T-cell (primary cell): ENCODE measurements at regions of chr11 and their contacts with region 1.

Region 1: DNA sequence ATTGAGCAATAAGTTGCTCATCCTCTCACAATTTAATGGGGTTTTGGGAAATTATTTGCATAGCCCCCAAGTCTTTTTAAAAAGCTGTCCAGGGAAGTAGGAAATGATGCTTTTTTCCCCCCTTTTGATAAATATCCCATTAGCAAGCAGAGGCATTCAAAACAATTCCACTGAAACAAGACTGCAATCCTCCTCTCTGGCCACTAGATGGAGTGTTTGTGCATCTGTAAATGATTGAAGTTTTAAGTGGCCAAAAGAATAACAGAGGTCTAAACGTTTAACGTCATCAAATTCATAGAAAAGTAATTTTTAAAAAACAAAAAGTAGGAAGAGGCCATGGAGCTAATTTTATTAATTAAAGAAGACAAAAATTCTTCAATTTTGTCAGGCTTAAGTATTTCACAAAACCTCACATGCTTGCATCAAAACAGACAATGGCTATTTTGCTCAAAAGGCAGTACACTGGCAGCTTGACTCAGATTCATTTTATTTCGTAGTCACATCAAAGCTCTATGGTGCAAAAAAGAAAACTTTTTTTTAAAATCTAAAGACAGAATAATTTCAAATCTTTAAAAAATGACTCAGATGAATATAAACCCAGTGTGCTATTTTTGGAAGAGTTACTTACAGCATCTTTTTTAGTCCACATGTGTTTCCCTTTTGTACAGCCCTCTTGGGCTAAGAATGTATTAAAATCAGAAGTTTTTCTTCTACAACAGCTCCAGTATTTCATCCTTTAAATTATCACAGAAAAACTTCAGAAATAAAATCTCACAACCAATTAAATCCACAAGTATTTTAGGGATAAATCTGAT is 17.8 kb downstream of the CHORDC1 start:
- DNase-seq: peak in 1 of 35 experiments; percentile 70
- ATAC-seq: peak in 2 of 4 experiments; percentile 59 to 64
- H3K4me3 ChIP-seq: no peak overlapping the region
- H3K4me3 Mint-ChIP-seq: no peak overlapping the region
- H3K27ac ChIP-seq: no peak overlapping the region
- H3K27ac Mint-ChIP-seq: peak overlapping the region; percentile 2 to 40
- H3K4me1 ChIP-seq: no peaks in the 10 kb centered on the region
- H3K4me1 Mint-ChIP-seq: peaks cover 19 to 24% (median 24%) of the 10 kb centered on the region in 3 donors
- H3K27me3 ChIP-seq: no peaks in the 10 kb centered on the region
- H3K27me3 Mint-ChIP-seq: no peaks in the 10 kb centered on the region

Region 2: GRCh38 chr11:90222459-90223247 is 17.6 kb after region 1 on chr11 and contains the start of gene CHORDC1:
- CTCF ChIA-PET with region 1: interaction called, 3 to 13 read pairs
- POLR2A ChIA-PET with region 1: no interaction called
- DNase-seq: peak; percentile 74 to 92 (median 84)
- ATAC-seq: peak; percentile 87 to 89 (median 88)
- H3K4me3 ChIP-seq: peak within 1 kb of the TSS; percentile 83 to 90
- H3K4me3 Mint-ChIP-seq: peak within 1 kb of the TSS; percentile 99 to 100 (median 99)
- H3K27ac ChIP-seq: peak within 1 kb of the TSS; percentile 86
- H3K27ac Mint-ChIP-seq: peak within 1 kb of the TSS; percentile 95 to 96
- H3K4me1 ChIP-seq: peaks cover 22 to 24% of the 10 kb centered on the region in 2 experiments
- H3K4me1 Mint-ChIP-seq: peaks cover 57 to 66% (median 59%) of the 10 kb centered on the region in 3 donors
- H3K27me3 ChIP-seq: no peaks in the 10 kb centered on the region
- H3K27me3 Mint-ChIP-seq: no peaks in the 10 kb centered on the region
- total RNA-seq, gene CHORDC1: 59.9 to 81.0 (median 64.9) TPM